B cell (primary cell): ENCODE measurements at regions of chr1 and their contacts with region 1.

Region 1: DNA sequence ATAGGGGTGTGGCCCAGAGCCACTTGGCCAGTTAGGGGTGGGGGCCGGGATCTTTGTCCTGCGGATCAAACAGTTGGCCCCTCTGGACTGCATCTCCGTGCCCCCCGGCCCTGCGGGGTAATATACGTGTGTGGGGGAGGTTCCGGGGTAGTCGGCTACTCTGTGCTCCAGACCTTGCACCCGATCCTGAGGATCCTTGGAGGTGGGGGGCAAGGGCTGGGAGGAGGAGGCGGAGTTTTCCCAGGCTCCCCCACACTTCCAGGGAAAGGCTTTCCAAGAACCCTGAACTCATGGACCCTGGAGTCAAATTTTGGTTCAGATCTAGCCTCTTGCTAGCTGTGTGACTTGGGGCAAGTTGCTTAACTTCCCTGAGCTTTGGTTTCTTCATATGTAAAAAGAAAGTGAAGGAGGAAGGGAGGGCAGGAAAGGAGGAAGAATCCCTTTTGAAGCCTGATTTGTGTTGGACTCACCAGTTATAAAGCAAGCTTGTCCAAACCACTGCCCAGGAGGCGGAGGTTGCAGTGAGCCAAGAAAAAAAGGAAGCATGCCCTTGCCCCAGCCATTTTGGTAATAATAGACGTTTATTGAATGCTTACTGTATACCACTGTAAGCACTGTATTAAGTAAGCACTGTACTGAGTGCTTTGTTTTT is 686 bp downstream of the MIIP start:
- DNase-seq: peak; percentile 40
- ATAC-seq: no peak
- H3K4me3 ChIP-seq: peak overlapping the region; percentile 61 to 81 (median 78)
- H3K4me3 Mint-ChIP-seq: peak overlapping the region; percentile 85
- H3K27ac ChIP-seq: peak overlapping the region in 1 of 2 donors; percentile 70
- H3K27ac Mint-ChIP-seq: peak overlapping the region; percentile 79
- H3K4me1 ChIP-seq: peaks cover 9% of the 10 kb centered on the region in 2 donors
- H3K4me1 Mint-ChIP-seq: peaks cover 18% of the 10 kb centered on the region
- H3K27me3 ChIP-seq: no peaks in the 10 kb centered on the region
- H3K27me3 Mint-ChIP-seq: no peaks in the 10 kb centered on the region
- CTCF ChIP-seq: no peak

Region 2: DNA sequence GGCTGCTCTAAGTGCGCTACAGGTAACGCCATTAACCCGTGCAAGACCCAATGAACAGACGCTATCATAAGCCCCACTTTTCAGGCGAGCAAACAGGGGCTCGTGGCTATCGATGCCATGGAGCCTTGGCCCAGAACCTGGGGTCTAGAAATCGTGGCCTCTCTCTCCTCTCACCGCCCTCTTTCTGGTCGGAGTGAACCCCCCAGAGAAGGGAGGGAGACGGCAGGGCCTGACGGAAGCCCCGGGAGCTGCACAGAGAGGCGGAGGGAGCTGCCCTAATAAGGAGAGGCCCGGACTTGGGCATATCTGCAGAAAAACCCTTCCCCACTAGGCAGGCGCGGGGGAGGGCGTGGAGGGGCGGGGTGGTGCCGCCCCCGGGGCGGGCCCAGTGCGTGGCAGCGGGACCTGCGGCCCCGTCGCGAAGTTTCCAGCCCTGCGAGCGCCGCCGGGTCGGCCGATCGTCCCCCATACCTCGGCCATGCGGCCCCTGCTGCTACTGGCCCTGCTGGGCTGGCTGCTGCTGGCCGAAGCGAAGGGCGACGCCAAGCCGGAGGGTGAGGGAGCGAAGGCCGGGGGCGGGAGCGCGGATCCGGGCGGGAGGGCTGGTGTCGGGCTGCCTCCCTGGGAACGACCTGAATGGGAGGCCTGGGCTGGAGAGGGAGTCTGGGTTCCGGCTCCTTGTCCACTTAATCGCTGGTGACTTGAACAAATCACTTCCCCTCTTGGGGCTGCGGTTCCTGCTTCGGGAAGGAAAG is 85.5 kb before region 1 on chr1 and contains the start of gene PLOD1:
- CTCF ChIA-PET with region 1: no interaction called
- POLR2A ChIA-PET with region 1: no interaction called
- intact Hi-C with region 1: no loop called
- DNase-seq: peak; percentile 85
- ATAC-seq: peak; percentile 100
- H3K4me3 ChIP-seq: peak within 1 kb of the TSS; percentile 45 to 82 (median 71)
- H3K4me3 Mint-ChIP-seq: peak within 1 kb of the TSS; percentile 90
- H3K27ac ChIP-seq: peak within 1 kb of the TSS; percentile 38 to 69
- H3K27ac Mint-ChIP-seq: peak within 1 kb of the TSS; percentile 74
- H3K4me1 ChIP-seq: peaks cover 9 to 12% of the 10 kb centered on the region in 2 donors
- H3K4me1 Mint-ChIP-seq: peaks cover 8% of the 10 kb centered on the region
- H3K27me3 ChIP-seq: no peaks in the 10 kb centered on the region
- H3K27me3 Mint-ChIP-seq: no peaks in the 10 kb centered on the region
- CTCF ChIP-seq: no peak
- total RNA-seq, gene PLOD1: 9.6 and 13.4 TPM in 2 replicates

Region 3: DNA sequence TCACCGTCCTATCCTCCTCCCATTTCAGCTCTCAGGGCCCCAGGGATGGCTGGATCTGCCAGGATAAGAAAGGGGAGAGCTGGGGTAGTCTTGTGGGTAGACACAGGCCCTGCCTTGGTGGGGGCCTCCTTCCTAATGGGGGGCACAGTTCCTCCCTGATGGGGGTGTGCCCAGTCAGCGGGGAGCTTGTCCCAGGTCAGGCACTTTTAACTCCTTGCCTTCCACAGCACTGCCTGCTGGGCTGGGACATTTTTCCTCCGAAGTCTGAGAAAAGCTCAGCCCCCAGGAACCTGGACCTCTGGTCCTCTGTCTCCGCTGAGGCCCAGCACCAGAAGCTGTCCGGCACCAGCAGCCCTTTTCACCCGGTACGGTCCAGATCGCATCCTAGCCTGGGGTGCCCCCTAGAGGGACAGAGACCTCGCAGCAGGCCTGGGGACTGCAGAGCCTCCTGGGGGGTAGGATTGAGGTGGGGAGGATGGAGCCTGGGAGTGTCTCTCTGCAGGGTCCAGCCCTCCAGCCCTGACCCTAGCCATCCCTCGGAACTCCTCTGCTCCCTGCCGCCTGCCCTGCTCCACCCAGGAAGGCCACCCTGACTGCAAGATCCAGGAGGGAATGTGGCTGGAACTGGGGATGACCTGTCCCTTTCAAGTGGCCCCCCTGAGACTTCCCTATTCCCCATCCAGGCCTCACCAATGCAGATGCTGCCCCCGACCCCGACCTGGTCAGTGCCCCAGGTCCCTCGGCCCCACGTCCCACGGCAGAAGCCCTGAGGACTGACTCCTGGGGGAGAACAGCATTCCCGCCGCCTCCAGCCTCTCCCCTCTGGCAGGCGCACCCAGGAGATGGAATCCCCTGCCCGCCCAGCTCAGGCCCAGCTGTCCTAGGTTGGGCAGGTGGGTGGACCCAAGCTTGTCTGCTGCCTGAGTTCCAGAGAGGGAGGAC is 11.3 kb after region 1 on chr1:
- CTCF ChIA-PET with region 1: interaction called, 5 read pairs
- POLR2A ChIA-PET with region 1: interaction called, 10 read pairs
- intact Hi-C with region 1: no loop called
- DNase-seq: peak; percentile 47
- ATAC-seq: peak; percentile 58
- H3K4me3 ChIP-seq: no peak overlapping the region
- H3K4me3 Mint-ChIP-seq: no peak overlapping the region
- H3K27ac ChIP-seq: no peak overlapping the region
- H3K27ac Mint-ChIP-seq: no peak overlapping the region
- H3K4me1 ChIP-seq: peaks cover 4 to 10% of the 10 kb centered on the region in 2 donors
- H3K4me1 Mint-ChIP-seq: peaks cover 16% of the 10 kb centered on the region
- H3K27me3 ChIP-seq: no peaks in the 10 kb centered on the region
- H3K27me3 Mint-ChIP-seq: no peaks in the 10 kb centered on the region
- CTCF ChIP-seq: peak; percentile 64

Region 4: DNA sequence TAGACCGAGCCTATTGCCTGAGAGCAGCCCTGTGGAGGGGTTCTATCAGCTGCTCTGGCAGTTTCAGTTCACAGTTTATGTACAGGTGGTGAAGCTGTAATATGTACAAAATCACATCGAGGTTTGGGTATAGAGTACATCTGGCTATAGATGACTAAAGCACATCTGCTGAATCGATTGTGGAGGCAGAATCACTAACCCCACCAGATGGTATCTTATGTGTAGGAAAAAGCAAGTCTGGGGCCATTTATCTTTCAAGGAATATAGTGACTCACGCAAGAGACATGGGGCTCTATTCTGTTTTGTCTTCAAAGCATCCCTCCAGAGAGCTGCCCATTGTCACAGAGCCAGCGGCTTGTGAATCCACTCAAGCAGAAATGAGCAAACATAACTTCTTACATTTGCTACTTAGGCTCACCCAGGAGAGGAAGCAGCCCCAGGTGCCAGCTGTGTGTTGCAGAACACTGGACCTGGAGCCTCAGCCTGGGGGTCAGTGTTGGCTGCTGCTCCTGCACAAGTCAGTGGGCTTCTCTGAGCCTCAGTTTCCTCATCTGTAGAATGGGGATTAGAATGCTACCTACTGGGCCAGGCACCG is 20.6 kb after region 1 on chr1:
- CTCF ChIA-PET with region 1: interaction called, 7 read pairs
- POLR2A ChIA-PET with region 1: interaction called, 32 read pairs
- intact Hi-C with region 1: loop called (anchors 1 kb)
- DNase-seq: peak; percentile 74
- ATAC-seq: peak; percentile 85
- H3K4me3 ChIP-seq: peak overlapping the region in 3 of 5 experiments; percentile 20 to 47 (median 32)
- H3K4me3 Mint-ChIP-seq: peak overlapping the region; percentile 74
- H3K27ac ChIP-seq: peak overlapping the region; percentile 82 to 91
- H3K27ac Mint-ChIP-seq: peak overlapping the region; percentile 95
- H3K4me1 ChIP-seq: peaks cover 40 to 50% of the 10 kb centered on the region in 2 donors
- H3K4me1 Mint-ChIP-seq: peaks cover 52% of the 10 kb centered on the region
- H3K27me3 ChIP-seq: no peaks in the 10 kb centered on the region
- H3K27me3 Mint-ChIP-seq: no peaks in the 10 kb centered on the region
- CTCF ChIP-seq: no peak

Region 5: DNA sequence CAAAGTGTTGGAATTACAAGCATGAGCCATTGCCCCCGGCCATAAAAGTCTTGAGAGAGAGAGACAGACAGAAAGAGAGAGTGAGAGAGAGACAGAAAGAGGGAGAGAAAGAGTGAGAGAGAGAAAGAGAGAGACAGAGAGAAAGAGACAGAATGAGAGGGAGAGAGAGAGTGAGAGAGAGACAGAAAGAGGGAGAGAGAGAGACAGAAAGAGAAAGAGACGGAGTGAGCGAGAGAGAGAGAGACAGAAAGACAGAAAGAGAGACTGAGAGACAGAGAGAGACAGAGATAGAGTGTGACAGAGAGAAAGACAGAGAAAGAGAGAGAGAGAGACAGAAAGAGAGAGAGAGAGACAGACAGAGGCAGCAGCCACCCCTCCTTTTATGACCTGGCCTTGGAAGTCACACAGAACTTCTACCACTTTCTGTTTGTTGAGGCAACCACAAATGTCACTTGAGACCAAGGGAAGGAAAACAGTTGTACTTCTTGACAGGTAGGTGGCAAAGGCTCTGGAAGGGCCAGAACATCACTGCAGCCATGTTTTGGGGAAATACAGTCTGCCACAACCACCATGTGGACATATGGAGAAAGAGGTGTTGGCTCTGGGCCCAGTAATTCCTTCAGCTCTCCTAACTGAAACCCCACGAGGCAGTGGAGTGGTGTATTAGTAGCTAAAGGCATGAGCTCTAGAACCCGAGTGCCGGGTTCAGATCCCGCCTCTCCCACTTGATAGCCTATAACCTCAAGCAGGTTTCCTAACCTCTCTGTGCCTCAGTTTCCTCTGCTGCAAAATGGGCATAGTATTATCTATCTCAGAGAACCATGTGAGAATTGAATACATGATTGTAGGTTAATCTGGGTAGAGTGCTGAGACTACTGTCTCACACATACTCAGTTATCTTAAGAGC is 93.7 kb after region 1 on chr1:
- CTCF ChIA-PET with region 1: interaction called, 4 read pairs
- POLR2A ChIA-PET with region 1: no interaction called
- intact Hi-C with region 1: loop called (anchors 1 kb)
- DNase-seq: no peak
- ATAC-seq: no peak
- H3K4me3 ChIP-seq: no peak overlapping the region
- H3K4me3 Mint-ChIP-seq: no peak overlapping the region
- H3K27ac ChIP-seq: no peak overlapping the region
- H3K27ac Mint-ChIP-seq: no peak overlapping the region
- H3K4me1 ChIP-seq: no peaks in the 10 kb centered on the region
- H3K4me1 Mint-ChIP-seq: no peaks in the 10 kb centered on the region
- H3K27me3 ChIP-seq: no peaks in the 10 kb centered on the region
- H3K27me3 Mint-ChIP-seq: no peaks in the 10 kb centered on the region
- CTCF ChIP-seq: no peak